ENCODE measurements at regions of chr15 and their contacts with region 1.

Region 1: GRCh38 chr15:80173022-80173759 is 20.4 kb downstream of the FAH start:
- DNase-seq: peak; percentile 52
- ATAC-seq: peak; percentile 59
- H3K4me3 ChIP-seq: no peak overlapping the region
- H3K27ac ChIP-seq: no peak overlapping the region
- H3K4me1 ChIP-seq: peaks cover 12% of the 10 kb centered on the region
- H3K27me3 ChIP-seq: no peaks in the 10 kb centered on the region
- CTCF ChIP-seq: peak; percentile 75
- POLR2A ChIP-seq: no peak
- RAD21 ChIP-seq: peak; percentile 83

Region 2: DNA sequence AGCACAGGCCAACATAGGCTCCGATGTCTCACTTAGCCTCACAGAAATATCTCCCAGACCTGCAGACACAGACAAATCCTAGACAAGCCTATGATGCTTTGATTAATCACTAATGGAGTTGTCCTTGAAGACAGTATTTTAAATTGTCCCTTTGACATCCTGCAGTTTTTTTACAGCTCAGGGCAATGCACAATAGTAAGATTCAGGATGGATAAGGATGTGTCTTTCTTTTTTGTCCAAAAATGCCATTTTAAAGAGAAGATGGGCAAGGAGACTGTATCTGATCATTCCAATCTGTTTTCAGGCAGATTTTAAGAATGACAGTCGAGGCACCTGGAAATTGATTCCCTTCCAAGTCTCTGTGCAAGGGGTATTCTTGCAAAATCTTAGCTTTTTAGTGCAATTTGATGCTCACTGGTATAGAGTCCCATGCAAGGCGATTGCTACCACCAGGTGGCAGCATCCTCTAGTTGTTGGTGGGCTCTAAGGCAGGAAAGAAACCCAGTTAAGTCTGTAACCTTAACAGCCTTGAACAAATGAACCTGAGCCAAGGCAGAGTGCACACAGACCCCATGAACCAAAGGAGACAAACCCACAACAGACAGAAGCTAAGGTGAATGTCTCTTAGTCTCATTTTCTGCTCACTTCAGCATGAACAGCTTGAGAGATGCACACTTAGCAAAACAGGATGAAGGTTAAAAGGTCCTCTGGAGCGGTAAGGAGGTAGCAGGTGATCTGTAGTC is 792.3 kb before region 1 on chr15:
- CTCF ChIA-PET with region 1: no interaction called
- POLR2A ChIA-PET with region 1: no interaction called
- dilution Hi-C with region 1: no loop called
- in situ Hi-C with region 1: no loop called
- intact Hi-C with region 1: loop called (anchors 2 kb)
- DNase-seq: peak; percentile 74
- ATAC-seq: peak; percentile 98
- H3K4me3 ChIP-seq: no peak overlapping the region
- H3K27ac ChIP-seq: no peak overlapping the region
- H3K4me1 ChIP-seq: no peaks in the 10 kb centered on the region
- H3K27me3 ChIP-seq: no peaks in the 10 kb centered on the region
- CTCF ChIP-seq: peak; percentile 90
- POLR2A ChIP-seq: no peak; the same call in 1 of the 2 replicates
- RAD21 ChIP-seq: peak; percentile 92

Region 3: GRCh38 chr15:79494963-79495746 is 678.0 kb before region 1 on chr15:
- CTCF ChIA-PET with region 1: no interaction called
- POLR2A ChIA-PET with region 1: no interaction called
- dilution Hi-C with region 1: no loop called
- in situ Hi-C with region 1: no loop called
- intact Hi-C with region 1: no loop called
- DNase-seq: no peak
- ATAC-seq: no peak
- H3K4me3 ChIP-seq: no peak overlapping the region
- H3K27ac ChIP-seq: no peak overlapping the region
- H3K4me1 ChIP-seq: no peaks in the 10 kb centered on the region
- H3K27me3 ChIP-seq: no peaks in the 10 kb centered on the region; the same call in 1 of the 2 replicates
- CTCF ChIP-seq: no peak
- POLR2A ChIP-seq: no peak
- RAD21 ChIP-seq: no peak

Region 4: GRCh38 chr15:79896637-79897379 is 276.4 kb before region 1 on chr15 and contains the start of gene MTHFS:
- CTCF ChIA-PET with region 1: no interaction called
- POLR2A ChIA-PET with region 1: no interaction called
- dilution Hi-C with region 1: no loop called
- in situ Hi-C with region 1: loop called (anchors 10 kb)
- intact Hi-C with region 1: loop called (anchors 5 kb)
- DNase-seq: peak; percentile 56
- ATAC-seq: peak; percentile 94
- H3K4me3 ChIP-seq: peak within 1 kb of the TSS; percentile 83
- H3K27ac ChIP-seq: peak within 1 kb of the TSS; percentile 88
- H3K4me1 ChIP-seq: peaks cover 8% of the 10 kb centered on the region
- H3K27me3 ChIP-seq: no peaks in the 10 kb centered on the region
- CTCF ChIP-seq: peak; percentile 52
- POLR2A ChIP-seq: peak; percentile 70; the same call in 1 of the 2 replicates
- RAD21 ChIP-seq: peak; percentile 31; the same call in 1 of the 2 replicates
- total RNA-seq, gene MTHFS: 6.3 and 8.3 TPM in 2 replicates

Region 5: GRCh38 chr15:79923515-79924395 is 249.4 kb before region 1 on chr15:
- CTCF ChIA-PET with region 1: no interaction called
- POLR2A ChIA-PET with region 1: no interaction called
- dilution Hi-C with region 1: no loop called
- in situ Hi-C with region 1: no loop called
- intact Hi-C with region 1: loop called (anchors 10 kb)
- DNase-seq: peak; percentile 93
- ATAC-seq: peak; percentile 97
- H3K4me3 ChIP-seq: peak overlapping the region; percentile 89
- H3K27ac ChIP-seq: peak overlapping the region; percentile 89
- H3K4me1 ChIP-seq: no peaks in the 10 kb centered on the region
- H3K27me3 ChIP-seq: no peaks in the 10 kb centered on the region
- CTCF ChIP-seq: no peak
- POLR2A ChIP-seq: peak; percentile 85
- RAD21 ChIP-seq: no peak; the same call in 1 of the 2 replicates

Region 6: GRCh38 chr15:80072285-80072994 is 100.8 kb before region 1 on chr15:
- CTCF ChIA-PET with region 1: no interaction called
- POLR2A ChIA-PET with region 1: no interaction called
- dilution Hi-C with region 1: no loop called
- in situ Hi-C with region 1: no loop called
- intact Hi-C with region 1: loop called (anchors 5 kb)
- DNase-seq: peak; percentile 91
- ATAC-seq: peak; percentile 97
- H3K4me3 ChIP-seq: peak overlapping the region; percentile 47
- H3K27ac ChIP-seq: peak overlapping the region; percentile 76
- H3K4me1 ChIP-seq: peaks cover 2% of the 10 kb centered on the region; the same call in 1 of the 2 replicates
- H3K27me3 ChIP-seq: no peaks in the 10 kb centered on the region
- CTCF ChIP-seq: no peak
- POLR2A ChIP-seq: no peak
- RAD21 ChIP-seq: no peak

Region 7: GRCh38 chr15:80160570-80161156 is 12.5 kb before region 1 on chr15:
- CTCF ChIA-PET with region 1: interaction called, 11 read pairs
- POLR2A ChIA-PET with region 1: no interaction called
- dilution Hi-C with region 1: no loop called
- in situ Hi-C with region 1: no loop called
- intact Hi-C with region 1: no loop called
- DNase-seq: peak; percentile 96
- ATAC-seq: peak; percentile 92
- H3K4me3 ChIP-seq: no peak overlapping the region
- H3K27ac ChIP-seq: peak overlapping the region; percentile 90
- H3K4me1 ChIP-seq: peaks cover 26% of the 10 kb centered on the region
- H3K27me3 ChIP-seq: no peaks in the 10 kb centered on the region
- CTCF ChIP-seq: no peak
- POLR2A ChIP-seq: no peak
- RAD21 ChIP-seq: no peak